ENCODE measurements at regions of chr1 and their contacts with region 1.

Region 1: GRCh38 chr1:27525296-27526272 is 35.6 kb upstream of the WASF2 start:
- DNase-seq: peak; percentile 94 to 97 (median 96)
- ATAC-seq: peak; percentile 90
- H3K4me3 ChIP-seq: peak overlapping the region; percentile 54
- H3K27ac ChIP-seq: peak overlapping the region; percentile 88
- H3K4me1 ChIP-seq: peaks cover 55 to 90% of the 10 kb centered on the region in 2 experiments
- H3K27me3 ChIP-seq: no peaks in the 10 kb centered on the region
- CTCF ChIP-seq: no peak
- EP300 ChIP-seq: peak; percentile 46
- POLR2A ChIP-seq: peak; percentile 86
- RAD21 ChIP-seq: peak in 1 of 2 experiments; percentile 34; a peak in 3 of 4 replicates

Region 2: GRCh38 chr1:27430903-27431600 is 94.5 kb before region 1 on chr1:
- CTCF ChIA-PET with region 1: no interaction called
- POLR2A ChIA-PET with region 1: no interaction called
- in situ Hi-C with region 1: no loop called
- intact Hi-C with region 1: loop called (anchors 1 kb)
- DNase-seq: peak in 3 of 4 experiments; percentile 24 to 51 (median 36)
- ATAC-seq: peak; percentile 3; the same call in 1 of the 3 replicates
- H3K4me3 ChIP-seq: no peak overlapping the region
- H3K27ac ChIP-seq: peak overlapping the region; percentile 52; the same call in 1 of the 3 replicates
- H3K4me1 ChIP-seq: peaks cover 21 to 71% of the 10 kb centered on the region in 2 experiments
- H3K27me3 ChIP-seq: no peaks in the 10 kb centered on the region
- CTCF ChIP-seq: peak in 1 of 3 experiments; percentile 26; a peak in 2 of 6 replicates
- EP300 ChIP-seq: no peak
- POLR2A ChIP-seq: no peak
- RAD21 ChIP-seq: peak in 1 of 2 experiments; percentile 35; a peak in 2 of 4 replicates

Region 3: GRCh38 chr1:27489910-27490741 is 35.5 kb before region 1 on chr1 and contains the start of gene WASF2:
- CTCF ChIA-PET with region 1: no interaction called
- POLR2A ChIA-PET with region 1: interaction called, 4 read pairs
- in situ Hi-C with region 1: no loop called
- intact Hi-C with region 1: loop called (anchors 2 kb)
- DNase-seq: peak; percentile 93 to 99 (median 98)
- ATAC-seq: peak; percentile 96
- H3K4me3 ChIP-seq: peak within 1 kb of the TSS; percentile 79
- H3K27ac ChIP-seq: peak within 1 kb of the TSS; percentile 99
- H3K4me1 ChIP-seq: peaks cover 8 to 25% of the 10 kb centered on the region in 2 experiments; a peak in 4 of 5 replicates
- H3K27me3 ChIP-seq: no peaks in the 10 kb centered on the region
- CTCF ChIP-seq: no peak; a peak in 1 of 6 replicates
- EP300 ChIP-seq: peak; percentile 5
- POLR2A ChIP-seq: peak; percentile 92
- RAD21 ChIP-seq: 0 out of 4 replicates have a peak, but pooled peaks of 1 of the 2 experiments have one; percentile 13
- polyA plus RNA-seq, gene WASF2: 8.2 to 9.7 TPM

Region 4: DNA sequence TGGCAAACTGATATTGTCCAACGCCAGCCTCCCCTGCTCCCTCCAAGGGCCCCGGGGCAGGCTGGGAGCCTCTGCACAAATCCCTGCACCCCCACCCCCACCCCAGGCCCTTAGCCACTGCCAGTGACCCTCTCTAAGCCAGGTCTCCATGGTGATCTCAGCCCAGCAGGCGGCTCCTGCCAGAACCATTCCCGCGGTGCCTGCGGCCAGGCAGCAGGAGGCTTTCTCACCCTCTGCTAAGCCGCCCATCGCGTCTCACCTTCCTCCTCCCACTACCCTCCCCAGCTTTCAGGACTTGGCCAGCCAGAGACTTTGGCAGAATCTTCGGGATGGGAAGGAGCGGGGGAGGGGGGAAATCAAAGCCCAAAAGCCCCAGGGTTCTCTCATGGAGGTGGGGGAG is 11.2 kb after region 1 on chr1:
- CTCF ChIA-PET with region 1: no interaction called
- POLR2A ChIA-PET with region 1: interaction called, 11 read pairs
- in situ Hi-C with region 1: no loop called
- intact Hi-C with region 1: no loop called
- DNase-seq: no peak
- ATAC-seq: no peak
- H3K4me3 ChIP-seq: no peak overlapping the region
- H3K27ac ChIP-seq: no peak overlapping the region
- H3K4me1 ChIP-seq: peaks cover 34 to 53% of the 10 kb centered on the region in 2 experiments
- H3K27me3 ChIP-seq: no peaks in the 10 kb centered on the region
- CTCF ChIP-seq: no peak
- EP300 ChIP-seq: no peak
- POLR2A ChIP-seq: no peak
- RAD21 ChIP-seq: no peak

Region 5: DNA sequence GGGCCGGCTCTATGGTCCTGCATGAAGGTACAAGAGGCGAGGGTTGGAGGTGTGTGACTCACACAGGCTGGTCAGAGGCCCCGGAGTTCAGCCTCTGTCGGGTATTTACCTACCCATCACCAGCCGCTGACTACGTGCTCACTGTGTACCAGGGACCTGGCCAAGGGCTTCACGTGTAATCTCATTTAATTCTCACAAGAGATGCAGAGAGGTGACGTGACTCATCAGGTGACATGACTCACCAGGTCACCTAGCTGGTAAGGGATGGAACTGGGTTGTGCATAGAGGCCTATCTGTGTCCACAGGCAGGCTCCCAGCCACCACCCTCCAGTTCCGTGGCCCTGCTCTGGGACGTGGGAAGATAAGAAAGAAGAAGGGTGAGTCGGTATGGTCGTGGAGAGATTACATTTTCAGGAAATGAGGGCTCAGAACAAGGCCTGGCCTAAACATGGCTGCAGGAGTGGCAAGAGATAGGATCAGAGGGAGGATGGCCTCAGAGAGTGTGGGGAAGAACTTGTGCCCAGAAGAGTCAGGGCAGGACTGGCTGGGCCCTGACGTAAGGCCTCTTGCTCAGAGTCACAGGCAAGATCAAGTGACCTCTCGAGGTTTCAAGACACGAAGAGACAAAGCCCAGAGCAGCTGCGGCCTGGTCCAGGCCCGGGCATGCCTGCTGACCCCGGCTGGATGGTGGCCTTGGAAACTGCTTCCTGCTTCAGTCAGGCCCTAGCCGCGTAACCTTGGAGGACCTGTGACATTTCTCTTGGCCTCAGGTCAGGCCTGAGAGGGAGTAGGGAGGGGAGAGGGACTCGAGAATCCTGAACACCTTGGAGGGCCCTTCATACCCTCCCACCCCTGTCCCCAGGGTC is 17.1 kb after region 1 on chr1:
- CTCF ChIA-PET with region 1: no interaction called
- POLR2A ChIA-PET with region 1: interaction called, 3 read pairs
- in situ Hi-C with region 1: no loop called
- intact Hi-C with region 1: loop called (anchors 2 kb)
- DNase-seq: peak; percentile 98 to 100 (median 99)
- ATAC-seq: peak; percentile 93
- H3K4me3 ChIP-seq: no peak overlapping the region
- H3K27ac ChIP-seq: peak overlapping the region; percentile 97
- H3K4me1 ChIP-seq: peaks cover 60 to 79% of the 10 kb centered on the region in 2 experiments
- H3K27me3 ChIP-seq: no peaks in the 10 kb centered on the region
- CTCF ChIP-seq: no peak; a peak in 1 of 6 replicates
- EP300 ChIP-seq: peak; percentile 98
- POLR2A ChIP-seq: peak; percentile 67
- RAD21 ChIP-seq: no peak; a peak in 3 of 4 replicates

Region 6: GRCh38 chr1:27556781-27557595 is 31.4 kb after region 1 on chr1:
- CTCF ChIA-PET with region 1: no interaction called
- POLR2A ChIA-PET with region 1: interaction called, 3 read pairs
- in situ Hi-C with region 1: no loop called
- intact Hi-C with region 1: loop called (anchors 2 kb)
- DNase-seq: peak; percentile 93 to 95 (median 94)
- ATAC-seq: peak; percentile 84
- H3K4me3 ChIP-seq: no peak overlapping the region
- H3K27ac ChIP-seq: peak overlapping the region; percentile 75
- H3K4me1 ChIP-seq: peaks cover 59 to 62% of the 10 kb centered on the region in 2 experiments
- H3K27me3 ChIP-seq: no peaks in the 10 kb centered on the region
- CTCF ChIP-seq: peak; percentile 91 to 93 (median 92)
- EP300 ChIP-seq: no peak; the same call in 1 of the 2 replicates
- POLR2A ChIP-seq: no peak
- RAD21 ChIP-seq: peak; percentile 79 to 89